ENCODE measurements at regions of chr16 and their contacts with region 1.

Region 1: GRCh38 chr16:57300387-57301125 is 16.1 kb upstream of the PLLP start:
- DNase-seq: peak; percentile 100
- H3K4me3 ChIP-seq: peak overlapping the region; percentile 29 to 51 (median 44)
- H3K27ac ChIP-seq: peak overlapping the region; percentile 83 to 94 (median 90)
- H3K4me1 ChIP-seq: peaks cover 0 to 33% (median 27%) of the 10 kb centered on the region in 4 donors
- H3K27me3 ChIP-seq: no peaks in the 10 kb centered on the region
- CTCF ChIP-seq: peak; percentile 88 to 99 (median 98)
- EP300 ChIP-seq: no peak
- POLR2A ChIP-seq: no peak

Region 2: GRCh38 chr16:57091975-57092785 is 208.4 kb before region 1 on chr16 and contains the start of gene CPNE2:
- intact Hi-C with region 1: loop called (anchors 5 kb)
- DNase-seq: peak; percentile 88
- H3K4me3 ChIP-seq: peak within 1 kb of the TSS; percentile 71 to 93 (median 85)
- H3K27ac ChIP-seq: peak within 1 kb of the TSS; percentile 80 to 86 (median 82)
- H3K4me1 ChIP-seq: peaks cover 0 to 28% (median 23%) of the 10 kb centered on the region in 4 donors
- H3K27me3 ChIP-seq: no peaks in the 10 kb centered on the region
- CTCF ChIP-seq: no peak
- EP300 ChIP-seq: no peak
- POLR2A ChIP-seq: no peak
- total RNA-seq, gene CPNE2: 22.9 to 59.9 (median 25.4) TPM

Region 3: DNA sequence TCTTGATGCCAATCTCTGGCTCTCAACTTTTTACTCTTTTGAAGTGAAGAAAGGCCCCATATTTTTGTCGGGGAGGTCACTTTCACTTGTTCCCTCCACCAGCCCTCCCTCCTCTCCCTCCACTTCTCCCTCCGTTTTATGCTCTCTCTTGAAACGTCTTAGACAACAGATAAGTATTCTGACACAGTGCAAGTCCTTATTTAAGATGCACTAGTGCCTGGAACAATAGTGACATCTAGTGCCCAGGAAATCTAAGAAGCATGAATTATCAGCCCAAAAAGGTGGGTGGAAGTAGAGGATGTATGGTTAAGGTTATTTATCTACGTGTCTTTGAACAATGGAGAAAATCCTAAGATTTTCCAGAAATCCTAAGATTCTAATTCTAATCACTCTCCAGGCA is 132.6 kb before region 1 on chr16:
- intact Hi-C with region 1: no loop called
- DNase-seq: peak; percentile 33
- H3K4me3 ChIP-seq: no peak overlapping the region
- H3K27ac ChIP-seq: no peak overlapping the region
- H3K4me1 ChIP-seq: peaks cover 0 to 9% (median 3%) of the 10 kb centered on the region in 4 donors
- H3K27me3 ChIP-seq: no peaks in the 10 kb centered on the region
- CTCF ChIP-seq: peak in 2 of 4 experiments; percentile 40 to 45
- EP300 ChIP-seq: no peak
- POLR2A ChIP-seq: no peak

Region 4: DNA sequence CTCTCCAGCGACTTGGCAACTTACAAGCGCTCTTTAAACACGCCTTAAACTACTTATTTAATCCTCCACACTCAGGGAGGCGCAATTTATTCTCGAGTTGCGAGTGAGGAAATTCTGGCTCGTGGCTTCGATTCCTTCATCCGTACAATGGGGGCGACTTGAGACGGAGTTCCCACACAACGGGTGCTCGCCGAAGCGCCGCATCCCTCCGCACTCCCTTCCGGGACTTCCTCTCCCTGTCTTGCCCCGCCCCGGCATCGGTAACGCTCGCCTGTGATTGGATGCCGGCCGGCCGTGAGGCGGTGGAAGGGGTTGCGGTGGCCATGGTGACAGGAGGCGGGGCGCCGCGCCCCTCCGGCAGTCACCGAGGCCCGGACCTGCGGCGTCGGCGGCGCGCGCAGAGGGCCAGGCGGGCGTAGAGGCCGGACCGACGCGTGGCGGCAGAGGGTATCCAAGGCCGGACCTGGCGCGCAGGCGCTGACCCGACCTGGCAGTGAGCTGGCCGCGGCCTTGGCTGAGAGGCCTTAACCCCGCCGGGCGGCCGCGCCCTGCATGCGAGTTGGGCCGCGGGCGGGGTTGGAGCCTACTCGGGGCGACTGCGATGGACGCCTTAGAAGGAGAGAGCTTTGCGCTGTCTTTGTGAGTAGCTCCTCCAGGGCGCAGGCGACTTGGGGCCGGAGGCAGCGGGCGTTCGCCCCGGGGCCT is 55.6 kb before region 1 on chr16 and contains the start of gene ARL2BP:
- intact Hi-C with region 1: loop called (anchors 1 kb)
- DNase-seq: peak; percentile 99
- H3K4me3 ChIP-seq: peak within 1 kb of the TSS; percentile 62 to 90 (median 86)
- H3K27ac ChIP-seq: peak within 1 kb of the TSS; percentile 93 to 96 (median 94)
- H3K4me1 ChIP-seq: peaks cover 0 to 14% (median 8%) of the 10 kb centered on the region in 4 donors
- H3K27me3 ChIP-seq: no peaks in the 10 kb centered on the region
- CTCF ChIP-seq: no peak
- EP300 ChIP-seq: no peak
- POLR2A ChIP-seq: peak; percentile 33 to 89
- total RNA-seq, gene ARL2BP: 64.7 to 85.6 (median 74.4) TPM

Region 5: GRCh38 chr16:57422026-57422944 is 121.7 kb after region 1 on chr16:
- intact Hi-C with region 1: loop called (anchors 1 kb)
- DNase-seq: peak; percentile 80
- H3K4me3 ChIP-seq: no peak overlapping the region
- H3K27ac ChIP-seq: peak overlapping the region in 2 of 4 donors; percentile 20 to 29
- H3K4me1 ChIP-seq: peaks cover 0 to 25% (median 19%) of the 10 kb centered on the region in 4 donors
- H3K27me3 ChIP-seq: no peaks in the 10 kb centered on the region
- CTCF ChIP-seq: peak; percentile 19 to 65 (median 50)
- EP300 ChIP-seq: no peak
- POLR2A ChIP-seq: no peak

Region 6: DNA sequence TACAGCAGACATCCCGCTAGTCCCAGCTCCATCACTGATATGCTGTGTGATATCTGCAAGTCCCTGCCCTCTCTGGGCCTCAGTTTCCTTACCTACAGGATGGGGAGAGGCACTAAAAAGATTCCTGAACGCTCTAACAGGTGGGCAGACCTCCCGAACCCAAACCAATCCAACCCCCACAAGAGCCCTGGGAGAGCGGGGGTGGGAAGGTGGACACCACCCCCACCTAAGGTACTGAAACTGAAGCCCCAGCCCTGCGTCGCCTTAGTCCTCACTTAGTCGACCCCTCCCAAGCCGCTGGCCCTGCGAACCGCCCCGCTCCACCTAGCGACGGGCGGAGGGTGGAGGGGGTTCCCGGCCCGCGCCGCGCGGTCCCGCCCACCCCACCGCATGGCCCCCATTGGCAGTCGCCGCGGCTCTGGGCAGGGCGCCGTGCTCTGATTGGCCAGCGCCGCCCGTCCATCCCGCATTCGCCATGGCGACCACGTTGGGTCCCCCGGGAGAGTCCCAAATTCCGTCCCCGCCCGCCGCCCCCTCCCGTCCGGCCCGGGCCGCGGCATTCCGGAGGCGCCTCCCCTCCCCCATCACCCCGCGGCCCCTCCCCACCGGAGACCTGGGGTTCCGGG is 235.2 kb after region 1 on chr16:
- intact Hi-C with region 1: loop called (anchors 5 kb)
- DNase-seq: peak; percentile 97
- H3K4me3 ChIP-seq: peak overlapping the region; percentile 72 to 87 (median 78)
- H3K27ac ChIP-seq: peak overlapping the region; percentile 88 to 94 (median 90)
- H3K4me1 ChIP-seq: peaks cover 0 to 56% (median 50%) of the 10 kb centered on the region in 4 donors
- H3K27me3 ChIP-seq: no peaks in the 10 kb centered on the region
- CTCF ChIP-seq: peak in 1 of 4 experiments; percentile 14
- EP300 ChIP-seq: no peak
- POLR2A ChIP-seq: peak in 1 of 2 donors; percentile 15

Region 7: GRCh38 chr16:57667526-57668258 is 367.1 kb after region 1 on chr16:
- intact Hi-C with region 1: no loop called
- DNase-seq: no peak
- H3K4me3 ChIP-seq: no peak overlapping the region
- H3K27ac ChIP-seq: no peak overlapping the region
- H3K4me1 ChIP-seq: no peaks in the 10 kb centered on the region
- H3K27me3 ChIP-seq: peaks cover 0 to 8% (median 0%) of the 10 kb centered on the region in 3 donors
- CTCF ChIP-seq: no peak
- EP300 ChIP-seq: no peak
- POLR2A ChIP-seq: no peak